Head of caudate nucleus (tissue), 42 donors: ENCODE measurements at regions of chr6 and their contacts with region 1.

Region 1: DNA sequence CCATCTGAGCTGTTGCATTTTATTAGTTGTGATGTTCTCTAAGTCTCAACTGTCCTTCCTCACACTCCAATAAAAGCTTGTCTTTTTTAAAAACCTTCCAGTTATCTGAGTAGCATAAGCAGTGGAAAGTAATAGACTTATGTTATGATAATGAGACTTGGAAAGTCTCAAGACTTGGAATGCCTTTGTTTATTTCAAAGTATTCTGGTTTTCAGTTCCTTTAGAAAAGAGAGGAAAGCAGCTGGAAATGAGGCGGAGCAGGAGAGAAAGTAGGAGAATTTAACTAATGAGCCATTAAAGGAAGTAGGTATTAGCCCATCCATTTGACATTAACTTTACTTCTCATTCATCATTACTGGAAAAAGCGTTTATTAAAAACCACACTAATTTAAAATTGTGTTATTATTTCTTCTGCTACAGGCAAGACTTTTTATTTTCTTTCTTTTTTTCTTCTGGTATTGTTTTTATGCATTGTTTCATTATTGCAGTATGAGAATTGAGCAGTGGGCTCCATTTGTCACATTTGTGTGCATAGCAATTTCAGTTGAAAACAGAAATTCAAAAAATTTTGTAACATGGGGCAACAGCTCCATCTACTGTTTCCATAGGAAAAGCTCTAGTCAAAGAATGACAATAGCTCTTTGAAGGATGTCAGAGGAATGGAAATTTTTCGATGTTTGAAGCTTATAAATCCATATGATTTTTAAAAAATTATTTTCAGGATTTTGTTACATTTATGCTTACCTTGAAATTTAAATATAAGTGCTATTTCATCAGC is 194.8 kb downstream of the COL9A1 start:
- DNase-seq: peak in 7 of 42 donors; percentile 9 to 74 (median 23)

Region 2: DNA sequence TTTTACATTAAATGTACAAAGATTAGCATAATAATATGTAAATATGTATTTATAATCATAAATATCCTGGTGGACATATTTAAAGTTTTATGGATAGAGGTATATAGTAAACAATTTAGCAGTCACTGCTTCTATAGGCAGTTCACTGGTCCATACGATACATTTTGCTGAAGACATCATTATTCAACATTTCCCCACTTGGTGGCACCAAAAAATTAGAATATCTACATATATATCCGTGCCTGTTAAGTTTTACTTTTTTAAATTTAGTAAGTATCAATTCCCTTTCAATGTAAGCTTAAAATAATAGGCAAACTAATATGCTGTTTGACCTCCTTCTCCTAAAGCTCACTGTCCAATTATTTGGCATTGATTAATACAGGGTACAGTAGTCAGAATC is 375.4 kb before region 1 on chr6:
- intact Hi-C with region 1: loop called (anchors 10 kb)
- DNase-seq: no peak

Region 3: GRCh38 chr6:69835414-69836179 is 272.4 kb before region 1 on chr6:
- intact Hi-C with region 1: loop called (anchors 5 kb)
- DNase-seq: peak in 21 of 42 donors; percentile 5 to 70 (median 37)

Region 4: DNA sequence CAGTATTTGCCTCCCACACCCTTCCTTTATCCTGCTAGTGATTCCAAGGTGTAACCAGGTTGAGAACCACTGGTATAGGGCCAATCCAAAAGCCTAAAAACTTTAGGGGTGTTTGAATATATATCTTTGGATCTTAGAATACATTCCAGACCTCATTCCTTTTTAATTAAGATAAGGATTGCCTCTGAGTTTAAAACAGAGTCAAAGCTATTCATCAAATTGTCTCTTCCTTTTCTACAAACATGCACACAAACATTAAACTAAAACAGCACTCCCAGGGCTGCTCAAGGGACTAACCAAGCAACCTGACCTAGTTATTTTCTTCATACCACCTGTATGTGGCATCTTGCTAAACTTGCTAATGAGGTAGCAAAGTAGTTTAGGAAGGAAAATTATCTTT is 217.0 kb after region 1 on chr6:
- intact Hi-C with region 1: no loop called
- DNase-seq: no peak